Activated CD4-positive, alpha-beta T cell treated with anti-CD3 and anti-CD28 coated beads, Interleukin-2, amount 10 ng/mL, durations not matched to agents 24 days and 14 days (primary cell): ENCODE measurements at regions of chr20 and their contacts with region 1.

Region 1: GRCh38 chr20:35277531-35278395 is at the start of gene MMP24OS:
- DNase-seq: peak; percentile 97
- H3K4me3 Mint-ChIP-seq: peak within 1 kb of the TSS; percentile 99
- H3K27ac Mint-ChIP-seq: peak within 1 kb of the TSS; percentile 97
- H3K4me1 Mint-ChIP-seq: peaks cover 30% of the 10 kb centered on the region
- H3K27me3 Mint-ChIP-seq: no peaks in the 10 kb centered on the region
- total RNA-seq, gene MMP24OS: 26.2 and 27.3 TPM in 2 replicates

Region 2: DNA sequence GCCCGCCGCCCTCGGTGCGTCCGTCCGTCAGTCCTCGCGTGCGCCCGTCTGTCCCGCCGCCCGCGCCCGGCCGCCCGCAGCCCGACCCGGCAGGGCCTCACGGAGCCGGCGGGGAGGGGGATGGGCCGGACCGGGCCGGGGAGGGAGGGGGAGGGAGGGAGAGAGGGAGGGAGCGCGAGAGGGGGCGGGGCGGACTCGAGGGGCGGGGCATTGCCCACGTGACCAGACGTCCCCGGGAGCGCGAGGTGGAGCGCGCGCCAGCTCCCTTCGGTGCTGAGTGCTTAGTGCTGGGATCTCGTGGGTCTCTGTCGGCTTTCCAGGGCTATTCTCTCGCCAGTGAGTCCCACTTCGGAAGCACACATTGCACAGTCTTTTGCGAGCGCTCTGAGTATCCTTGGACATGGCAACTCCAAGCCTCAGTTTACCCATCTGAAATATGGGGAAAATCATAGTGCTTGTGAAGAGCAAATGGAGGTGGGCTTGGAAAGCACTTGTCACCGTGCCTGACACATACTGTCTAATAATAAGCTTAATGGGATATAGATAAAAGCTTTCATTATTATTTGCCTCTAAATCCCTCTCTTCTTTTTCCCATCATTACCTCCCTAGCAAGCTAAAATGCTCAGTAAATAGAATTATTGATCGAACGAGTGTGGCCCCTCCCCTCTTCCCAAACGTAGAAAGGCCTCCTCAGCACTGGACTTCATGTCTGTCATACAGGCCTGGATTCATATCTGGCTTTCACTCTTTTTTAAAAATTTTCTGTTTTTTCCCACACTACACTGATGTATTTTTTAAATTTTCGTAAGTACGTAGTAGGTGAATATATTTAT is 452.0 kb before region 1 on chr20 and contains the start of gene NCOA6:
- intact Hi-C with region 1: loop called (anchors 10 kb)
- DNase-seq: peak; percentile 92
- H3K4me3 Mint-ChIP-seq: peak within 1 kb of the TSS; percentile 95
- H3K27ac Mint-ChIP-seq: peak within 1 kb of the TSS; percentile 93
- H3K4me1 Mint-ChIP-seq: peaks cover 28% of the 10 kb centered on the region
- H3K27me3 Mint-ChIP-seq: peaks cover 11% of the 10 kb centered on the region
- total RNA-seq, gene NCOA6: 25.1 and 26.8 TPM in 2 replicates

Region 3: DNA sequence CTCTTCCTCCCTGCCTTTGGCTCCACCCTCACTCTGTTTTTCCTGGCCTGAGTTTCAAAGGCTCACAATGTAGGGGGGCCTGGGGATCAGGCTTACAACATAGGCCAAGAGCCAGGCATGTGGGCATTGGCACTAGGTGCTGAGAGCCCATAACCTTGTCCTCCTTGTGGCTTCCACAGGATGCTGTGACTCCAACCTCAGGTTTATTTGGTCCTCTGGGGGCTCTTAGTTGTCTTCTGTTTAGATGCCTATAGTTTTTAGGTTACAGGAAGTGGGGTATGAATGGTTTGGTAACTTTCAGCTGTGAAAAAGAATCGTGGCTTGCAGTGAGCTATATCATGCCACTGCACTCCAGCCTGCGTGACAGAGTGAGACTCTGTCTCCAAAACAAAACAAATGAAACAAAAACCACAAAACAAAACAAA is 25.7 kb before region 1 on chr20:
- intact Hi-C with region 1: loop called (anchors 2 kb)
- DNase-seq: peak; percentile 88
- H3K4me3 Mint-ChIP-seq: peak overlapping the region; percentile 78
- H3K27ac Mint-ChIP-seq: peak overlapping the region; percentile 98
- H3K4me1 Mint-ChIP-seq: peaks cover 28% of the 10 kb centered on the region
- H3K27me3 Mint-ChIP-seq: no peaks in the 10 kb centered on the region